OCI-LY7 (cell line): ENCODE measurements at regions of chr15 and their contacts with region 1.

Region 1: DNA sequence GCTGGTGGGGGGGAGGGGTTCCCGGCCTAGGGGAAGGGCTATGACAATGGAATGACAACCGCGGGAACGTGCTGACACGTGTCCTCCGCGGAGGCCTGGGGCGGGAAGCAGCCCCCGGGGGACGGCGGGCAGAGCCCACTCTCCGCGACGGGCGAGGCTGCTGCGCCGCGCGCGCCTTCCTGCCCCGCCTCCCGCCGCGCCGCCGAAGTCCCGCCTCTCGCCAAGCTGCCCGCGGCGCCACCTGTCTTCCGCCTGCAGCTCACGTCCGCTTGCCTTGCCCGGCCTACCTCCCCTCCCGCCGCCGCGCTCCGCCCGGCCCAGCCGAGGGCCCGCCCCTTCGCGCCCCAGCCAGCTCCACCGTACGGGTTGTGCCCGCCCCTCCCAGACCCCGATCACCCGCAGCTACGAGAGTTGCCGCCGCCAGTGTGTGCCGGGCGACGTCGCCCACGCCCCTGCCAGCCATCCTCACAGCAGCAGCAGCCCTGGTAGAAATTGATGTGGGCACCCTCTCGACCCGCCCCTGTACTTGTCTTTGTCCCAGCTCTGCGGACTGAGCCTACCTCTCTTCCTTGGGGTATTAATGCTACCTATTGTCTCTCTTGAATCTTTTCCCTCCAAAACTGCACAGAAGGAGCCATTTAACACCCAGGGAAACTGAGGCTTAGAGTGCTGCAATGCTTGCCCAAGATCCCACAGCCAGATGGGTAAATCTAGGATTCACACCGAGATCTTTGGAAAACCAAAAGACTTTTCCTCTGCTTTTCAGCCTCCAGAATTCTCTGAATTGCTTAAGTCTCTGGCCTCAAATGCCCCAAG is at the start of gene PARP16:
- DNase-seq: peak; percentile 94
- H3K4me3 ChIP-seq: peak within 1 kb of the TSS; percentile 79
- H3K27ac ChIP-seq: peak within 1 kb of the TSS; percentile 43
- H3K4me1 ChIP-seq: peaks cover 27% of the 10 kb centered on the region
- CTCF ChIP-seq: peak; percentile 43
- total RNA-seq, gene PARP16: 10.8 and 21.2 TPM in 2 replicates

Region 2: DNA sequence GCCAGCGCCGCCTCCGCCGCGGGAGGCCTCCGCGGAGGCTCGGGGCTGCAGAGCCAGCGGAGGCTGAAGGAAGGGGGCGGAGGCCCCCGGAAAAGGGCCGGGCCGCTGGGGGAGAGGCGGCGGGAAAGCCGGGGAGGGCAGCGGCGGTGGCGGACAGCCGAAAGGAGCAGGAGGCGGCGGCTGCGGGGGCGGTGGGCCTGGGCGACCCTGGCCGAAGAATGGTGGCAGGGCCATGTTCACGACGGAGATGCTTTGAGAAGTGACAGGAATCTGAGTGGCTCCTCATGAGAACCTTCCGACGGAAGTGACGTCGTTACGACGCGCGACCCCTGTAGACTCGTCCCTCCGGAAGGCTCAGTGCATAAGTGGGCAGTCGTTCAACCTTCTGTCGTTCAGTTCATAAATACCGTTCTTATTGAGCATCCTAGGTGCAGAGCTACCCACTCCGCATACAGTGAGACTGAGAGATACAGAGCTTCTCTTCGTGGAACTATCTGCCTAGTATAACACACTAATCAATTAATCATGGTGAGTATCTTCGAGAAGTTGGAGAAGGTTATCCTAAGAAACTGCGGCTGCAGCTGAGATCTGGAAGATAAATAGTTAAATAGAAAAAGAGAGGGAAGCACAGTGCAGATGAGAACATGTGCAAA is 153.2 kb before region 1 on chr15 and contains the start of gene PDCD7:
- CTCF ChIA-PET with region 1: no interaction called
- POLR2A ChIA-PET with region 1: interaction called, 10 read pairs
- intact Hi-C with region 1: no loop called
- DNase-seq: peak; percentile 95
- H3K4me3 ChIP-seq: peak within 1 kb of the TSS; percentile 87
- H3K27ac ChIP-seq: peak within 1 kb of the TSS; percentile 64
- H3K4me1 ChIP-seq: peaks cover 13% of the 10 kb centered on the region
- CTCF ChIP-seq: no peak
- total RNA-seq, gene PDCD7: 27.2 and 34.6 TPM in 2 replicates

Region 3: GRCh38 chr15:65264863-65265430 is 22.0 kb before region 1 on chr15:
- CTCF ChIA-PET with region 1: interaction called, 15 read pairs
- POLR2A ChIA-PET with region 1: interaction called, 3 read pairs
- intact Hi-C with region 1: no loop called
- DNase-seq: no peak
- H3K4me3 ChIP-seq: no peak overlapping the region
- H3K27ac ChIP-seq: no peak overlapping the region
- H3K4me1 ChIP-seq: no peaks in the 10 kb centered on the region
- CTCF ChIP-seq: no peak

Region 4: DNA sequence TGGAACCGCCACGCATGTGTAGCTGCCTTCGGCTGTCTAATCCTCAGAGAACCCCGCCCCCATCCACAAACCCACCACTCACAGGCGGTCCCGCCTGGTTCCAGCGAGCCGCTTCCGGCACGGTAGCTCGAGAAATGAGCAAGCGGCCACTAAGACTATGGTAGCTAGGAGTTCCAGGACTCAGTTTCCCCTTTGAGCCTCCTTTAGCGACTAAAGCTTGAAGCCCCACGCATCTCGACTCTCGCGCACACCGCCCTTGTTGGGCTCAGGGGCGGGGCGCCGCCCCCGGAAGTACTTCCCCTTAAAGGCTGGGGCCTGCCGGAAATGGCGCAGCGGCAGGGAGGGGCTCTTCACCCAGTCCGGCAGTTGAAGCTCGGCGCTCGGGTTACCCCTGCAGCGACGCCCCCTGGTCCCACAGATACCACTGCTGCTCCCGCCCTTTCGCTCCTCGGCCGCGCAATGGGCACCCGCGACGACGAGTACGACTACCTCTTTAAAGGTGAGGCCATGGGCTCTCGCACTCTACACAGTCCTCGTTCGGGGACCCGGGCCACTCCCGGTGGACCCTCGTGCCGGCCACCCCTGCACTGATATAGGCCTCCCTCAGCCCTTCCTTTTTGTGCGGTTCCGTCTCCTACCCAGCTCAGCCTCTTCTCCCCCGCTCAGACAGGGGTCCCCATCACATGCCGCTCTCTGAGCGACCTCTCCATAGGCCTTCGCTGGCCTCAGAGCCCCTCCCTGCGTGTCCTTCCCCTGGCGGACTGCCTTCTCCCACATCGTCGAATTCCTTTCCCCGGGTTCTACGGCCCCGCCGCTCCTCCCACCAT is 582.4 kb after region 1 on chr15 and contains the start of gene RAB11A:
- CTCF ChIA-PET with region 1: no interaction called
- POLR2A ChIA-PET with region 1: no interaction called
- intact Hi-C with region 1: loop called (anchors 5 kb)
- DNase-seq: peak; percentile 98
- H3K4me3 ChIP-seq: peak within 1 kb of the TSS; percentile 94
- H3K27ac ChIP-seq: peak within 1 kb of the TSS; percentile 83
- H3K4me1 ChIP-seq: peaks cover 18% of the 10 kb centered on the region
- CTCF ChIP-seq: peak; percentile 68
- total RNA-seq, gene RAB11A: 116 and 130 TPM in 2 replicates